Activated naive CD4-positive, alpha-beta T cell treated with anti-CD3 and anti-CD28 coated beads for 36 hours (primary cell): ENCODE measurements at regions of chr1 and their contacts with region 1.

Region 1: GRCh38 chr1:226634166-226634588 is 85.6 kb downstream of the STUM start:
- DNase-seq: peak; percentile 87
- H3K4me3 Mint-ChIP-seq: no peak overlapping the region
- H3K27ac Mint-ChIP-seq: peak overlapping the region; percentile 3
- H3K4me1 Mint-ChIP-seq: peaks cover 46% of the 10 kb centered on the region
- H3K27me3 Mint-ChIP-seq: no peaks in the 10 kb centered on the region

Region 2: DNA sequence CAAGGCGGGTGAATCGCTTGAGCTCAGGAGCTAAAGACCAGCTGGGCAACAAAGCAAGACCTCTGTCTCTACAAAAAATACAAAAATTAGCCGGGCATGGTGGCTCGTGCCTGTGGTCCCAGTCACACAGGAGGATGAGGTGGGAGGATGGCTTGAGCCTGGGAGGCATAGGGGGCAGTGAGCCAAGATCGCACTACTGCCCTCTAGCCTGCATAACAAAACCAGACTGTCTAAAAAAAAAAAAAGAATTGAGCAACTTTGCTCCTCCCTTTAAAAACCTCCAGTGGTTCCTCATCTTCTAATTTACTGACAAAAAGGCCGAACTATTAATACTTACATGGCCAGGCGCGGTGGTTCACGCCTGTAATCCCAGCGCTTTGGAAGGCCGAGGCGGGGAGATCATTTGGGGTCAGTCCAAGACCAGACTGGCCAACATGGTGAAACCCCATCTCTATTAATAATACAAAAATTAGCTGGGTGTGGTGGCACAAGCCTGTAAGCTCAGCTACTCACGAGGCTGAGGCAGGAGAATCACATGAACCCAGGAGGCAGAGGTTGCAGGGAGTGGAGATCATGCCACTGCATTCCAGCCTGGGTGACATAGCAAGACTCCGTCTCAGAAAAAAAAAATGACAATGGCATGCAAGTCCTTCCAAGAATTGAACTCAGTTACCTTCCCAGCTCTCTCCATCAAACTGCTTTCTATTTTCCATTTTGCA is 452.0 kb before region 1 on chr1:
- CTCF ChIA-PET with region 1: no interaction called
- intact Hi-C with region 1: no loop called
- DNase-seq: no peak
- H3K4me3 Mint-ChIP-seq: no peak overlapping the region
- H3K27ac Mint-ChIP-seq: no peak overlapping the region
- H3K4me1 Mint-ChIP-seq: peaks cover 52% of the 10 kb centered on the region
- H3K27me3 Mint-ChIP-seq: no peaks in the 10 kb centered on the region

Region 3: GRCh38 chr1:226649780-226650179 is 15.6 kb after region 1 on chr1:
- CTCF ChIA-PET with region 1: interaction called, 23 read pairs
- intact Hi-C with region 1: no loop called
- DNase-seq: peak; percentile 67
- H3K4me3 Mint-ChIP-seq: no peak overlapping the region
- H3K27ac Mint-ChIP-seq: no peak overlapping the region
- H3K4me1 Mint-ChIP-seq: peaks cover 53% of the 10 kb centered on the region
- H3K27me3 Mint-ChIP-seq: no peaks in the 10 kb centered on the region

Region 4: DNA sequence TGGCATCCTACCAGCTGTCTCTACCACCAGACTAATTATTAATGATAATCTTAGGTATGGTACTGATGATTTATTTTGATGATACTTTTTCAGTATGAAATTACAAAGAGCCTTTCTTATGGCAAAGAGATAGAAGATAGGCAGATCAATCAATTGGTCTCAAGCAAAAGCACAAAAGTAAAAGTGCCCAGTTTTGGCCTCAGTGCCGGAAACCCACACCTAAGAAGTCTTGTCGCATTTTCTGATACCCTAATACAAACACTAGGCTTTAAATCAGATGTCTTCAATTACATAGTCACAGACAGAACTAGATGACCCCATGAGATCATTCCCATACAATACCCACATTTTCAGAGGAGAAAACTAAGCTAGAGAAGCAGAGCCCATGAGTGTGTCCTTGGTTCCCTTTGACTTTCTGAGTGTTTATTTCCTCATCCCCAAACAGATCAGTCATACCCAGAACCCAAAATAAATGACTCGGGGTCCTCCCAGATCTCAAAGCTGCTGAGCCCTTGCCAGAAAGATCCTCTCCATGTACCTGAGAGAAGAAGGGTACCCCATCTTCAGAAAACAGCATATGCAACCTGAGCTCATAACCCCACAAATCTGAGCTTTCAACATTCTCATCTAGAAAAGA is 97.2 kb after region 1 on chr1:
- CTCF ChIA-PET with region 1: interaction called, 10 read pairs
- intact Hi-C with region 1: no loop called
- DNase-seq: peak; percentile 47
- H3K4me3 Mint-ChIP-seq: peak overlapping the region; percentile 77
- H3K27ac Mint-ChIP-seq: peak overlapping the region; percentile 98
- H3K4me1 Mint-ChIP-seq: peaks cover 74% of the 10 kb centered on the region
- H3K27me3 Mint-ChIP-seq: no peaks in the 10 kb centered on the region

Region 5: DNA sequence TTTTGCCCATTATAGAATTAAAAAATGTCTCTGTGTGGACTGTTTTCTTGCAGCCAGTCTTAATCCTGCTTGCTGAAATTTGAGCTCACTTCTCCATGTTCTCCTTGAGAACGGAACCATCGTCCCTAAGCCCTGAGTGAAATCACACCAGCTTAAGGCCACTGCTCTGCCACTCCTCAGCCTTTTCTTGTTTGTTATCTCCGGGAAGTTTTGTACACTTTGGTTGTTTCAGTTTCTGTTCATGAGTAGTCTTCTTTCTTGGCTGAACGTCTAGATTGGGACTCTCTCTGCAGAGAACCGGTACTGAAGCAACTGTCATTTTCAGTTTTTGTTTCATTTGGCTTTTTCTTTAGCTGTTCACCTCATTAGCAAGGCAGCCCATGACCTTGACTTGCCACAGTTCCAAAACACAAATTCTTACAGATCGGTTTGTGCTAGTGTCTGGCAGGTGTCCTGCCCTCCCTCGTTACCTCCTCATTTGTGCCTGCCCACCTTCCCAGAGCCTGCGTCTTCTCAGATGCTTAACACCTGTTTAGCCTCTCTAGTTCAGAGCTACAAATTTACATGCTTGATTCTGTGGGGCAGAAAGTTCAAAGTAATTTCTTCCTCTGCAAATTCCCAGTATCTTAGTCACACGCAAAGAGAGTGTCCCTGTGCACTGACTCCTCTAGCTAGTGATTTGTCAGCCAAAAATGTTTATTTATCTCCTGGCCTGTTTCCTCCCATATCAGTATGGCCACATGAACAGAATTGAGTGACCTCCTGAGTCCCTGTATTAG is 248.6 kb after region 1 on chr1:
- CTCF ChIA-PET with region 1: interaction called, 5 read pairs
- intact Hi-C with region 1: loop called (anchors 2 kb)
- DNase-seq: peak; percentile 57
- H3K4me3 Mint-ChIP-seq: peak overlapping the region; percentile 74
- H3K27ac Mint-ChIP-seq: peak overlapping the region; percentile 93
- H3K4me1 Mint-ChIP-seq: peaks cover 51% of the 10 kb centered on the region
- H3K27me3 Mint-ChIP-seq: no peaks in the 10 kb centered on the region